ENCODE measurements at regions of chr11 and their contacts with region 1.

Region 1: GRCh38 chr11:115334932-115335788 is 169.1 kb downstream of the CADM1 start:
- DNase-seq: no peak
- H3K4me3 ChIP-seq: no peak overlapping the region
- H3K27ac ChIP-seq: no peak overlapping the region
- H3K4me1 ChIP-seq: no peaks in the 10 kb centered on the region
- H3K27me3 ChIP-seq: no peaks in the 10 kb centered on the region
- CTCF ChIP-seq: peak; percentile 29 to 46 (median 41)
- EP300 ChIP-seq: no peak
- POLR2A ChIP-seq: no peak

Region 2: DNA sequence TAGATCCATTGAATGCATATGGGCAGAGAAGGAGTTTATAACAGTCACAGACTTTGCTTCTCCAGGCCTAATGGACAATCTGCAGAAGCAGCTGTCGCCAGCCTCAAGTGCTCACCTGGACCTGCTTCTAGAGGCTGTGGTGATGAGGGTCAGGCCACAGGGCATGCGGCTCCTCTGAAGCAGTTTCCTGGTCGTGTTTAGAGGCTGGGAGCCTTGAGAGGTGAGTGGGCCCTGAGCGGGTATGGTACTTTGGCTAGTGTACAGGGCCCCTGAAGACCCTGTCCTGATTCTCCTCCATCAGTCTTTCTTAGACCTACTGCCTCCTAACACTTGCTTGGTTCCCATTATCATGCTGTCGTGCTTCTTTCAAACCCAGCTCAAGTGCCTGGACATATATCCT is 615.6 kb before region 1 on chr11:
- intact Hi-C with region 1: no loop called
- DNase-seq: no peak
- H3K4me3 ChIP-seq: no peak overlapping the region
- H3K27ac ChIP-seq: no peak overlapping the region
- H3K4me1 ChIP-seq: no peaks in the 10 kb centered on the region
- H3K27me3 ChIP-seq: no peaks in the 10 kb centered on the region
- CTCF ChIP-seq: no peak
- EP300 ChIP-seq: no peak
- POLR2A ChIP-seq: no peak

Region 3: DNA sequence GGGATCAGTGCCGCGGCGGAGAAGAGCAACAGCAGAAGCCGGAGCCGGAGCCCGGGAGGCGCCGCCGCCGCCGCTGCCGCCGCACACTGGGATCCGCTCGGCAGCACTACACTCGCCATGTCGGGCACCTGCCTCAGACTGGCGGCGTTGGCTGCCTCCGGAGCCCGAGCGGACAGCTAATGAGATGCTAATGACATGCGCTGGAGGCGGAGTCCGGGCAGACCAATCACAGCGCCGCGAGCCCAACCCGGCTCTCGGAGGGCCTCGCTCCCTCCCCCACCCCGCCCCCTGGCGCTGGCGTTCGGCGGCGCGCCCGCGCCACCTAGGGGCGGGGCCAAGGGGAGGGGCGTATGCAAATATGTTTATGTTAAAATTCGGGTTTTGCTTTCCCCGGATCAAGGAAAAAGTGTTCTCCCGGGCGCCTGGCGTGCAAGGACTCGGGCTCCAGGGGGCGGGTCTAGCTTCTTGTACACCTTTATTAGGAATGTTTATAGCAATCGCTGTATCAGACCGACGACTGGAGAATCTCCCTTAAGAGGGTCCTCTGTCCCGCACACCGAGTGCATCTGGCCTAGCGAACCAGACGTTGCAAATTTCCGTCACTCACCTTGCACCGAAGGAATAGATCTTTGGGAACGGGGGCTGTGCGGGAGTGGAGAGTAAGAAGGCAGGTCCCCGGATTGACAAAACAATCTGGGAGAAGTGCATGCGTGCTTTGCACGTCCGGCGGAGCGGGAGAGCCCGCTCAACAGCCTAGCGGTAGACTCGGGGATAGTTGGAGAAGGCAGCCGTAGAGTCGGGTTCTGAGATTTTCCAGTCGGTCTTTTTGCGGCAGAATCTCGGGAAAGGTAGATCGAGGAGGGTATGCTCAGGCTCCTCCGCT is 169.4 kb after region 1 on chr11 and contains the start of gene CADM1:
- intact Hi-C with region 1: loop called (anchors 5 to 10 kb)
- DNase-seq: peak; percentile 96 to 97 (median 97)
- H3K4me3 ChIP-seq: peak within 1 kb of the TSS; percentile 66
- H3K27ac ChIP-seq: peak within 1 kb of the TSS; percentile 33 to 77
- H3K4me1 ChIP-seq: peaks cover 4% of the 10 kb centered on the region
- H3K27me3 ChIP-seq: no peaks in the 10 kb centered on the region
- CTCF ChIP-seq: peak; percentile 63 to 81 (median 72)
- EP300 ChIP-seq: no peak
- POLR2A ChIP-seq: peak; percentile 85
- total RNA-seq, gene CADM1: 13.0 to 61.2 (median 17.2) TPM

Region 4: DNA sequence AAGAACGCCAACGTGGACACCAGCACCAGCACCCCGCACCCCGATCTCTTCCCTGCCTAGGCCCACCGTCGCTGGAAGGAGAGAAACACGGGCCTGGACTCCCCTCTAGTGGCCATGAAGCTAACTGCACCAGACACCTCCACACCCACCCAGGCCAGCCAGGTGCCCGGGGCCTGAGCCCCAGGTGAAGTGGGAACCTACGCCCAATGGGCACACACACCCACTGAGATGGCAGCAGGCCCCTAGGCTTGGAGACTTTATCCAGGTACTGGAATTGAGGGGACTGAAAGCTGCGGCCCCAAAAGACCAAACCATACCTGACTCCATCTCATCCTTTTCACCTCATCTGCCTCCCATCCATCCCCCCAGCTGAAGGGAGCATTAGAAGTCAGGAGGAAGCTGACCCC is 1356.6 kb after region 1 on chr11:
- intact Hi-C with region 1: loop called in 1 of 4 experiments (anchors 10 kb)
- DNase-seq: peak; percentile 28 to 64 (median 40)
- H3K4me3 ChIP-seq: no peak overlapping the region
- H3K27ac ChIP-seq: no peak overlapping the region
- H3K4me1 ChIP-seq: no peaks in the 10 kb centered on the region
- H3K27me3 ChIP-seq: no peaks in the 10 kb centered on the region
- CTCF ChIP-seq: peak; percentile 37 to 75 (median 60)
- EP300 ChIP-seq: no peak
- POLR2A ChIP-seq: no peak